ENCODE measurements at regions of chr12 and their contacts with region 1.

Region 1: GRCh38 chr12:47812797-47813510 is 6.7 kb downstream of the HDAC7 start:
- DNase-seq: peak; percentile 61 to 95 (median 85)
- ATAC-seq: peak; percentile 84
- H3K4me3 ChIP-seq: peak overlapping the region; percentile 80
- H3K4me3 Mint-ChIP-seq: peak overlapping the region; percentile 83 to 96 (median 88)
- H3K27ac ChIP-seq: peak overlapping the region; percentile 88
- H3K27ac Mint-ChIP-seq: peak overlapping the region; percentile 92 to 99 (median 97)
- H3K4me1 ChIP-seq: peaks cover 85 to 87% of the 10 kb centered on the region in 2 donors
- H3K4me1 Mint-ChIP-seq: peaks cover 77 to 100% (median 90%) of the 10 kb centered on the region in 7 donors
- H3K27me3 ChIP-seq: no peaks in the 10 kb centered on the region
- H3K27me3 Mint-ChIP-seq: no peaks in the 10 kb centered on the region

Region 2: DNA sequence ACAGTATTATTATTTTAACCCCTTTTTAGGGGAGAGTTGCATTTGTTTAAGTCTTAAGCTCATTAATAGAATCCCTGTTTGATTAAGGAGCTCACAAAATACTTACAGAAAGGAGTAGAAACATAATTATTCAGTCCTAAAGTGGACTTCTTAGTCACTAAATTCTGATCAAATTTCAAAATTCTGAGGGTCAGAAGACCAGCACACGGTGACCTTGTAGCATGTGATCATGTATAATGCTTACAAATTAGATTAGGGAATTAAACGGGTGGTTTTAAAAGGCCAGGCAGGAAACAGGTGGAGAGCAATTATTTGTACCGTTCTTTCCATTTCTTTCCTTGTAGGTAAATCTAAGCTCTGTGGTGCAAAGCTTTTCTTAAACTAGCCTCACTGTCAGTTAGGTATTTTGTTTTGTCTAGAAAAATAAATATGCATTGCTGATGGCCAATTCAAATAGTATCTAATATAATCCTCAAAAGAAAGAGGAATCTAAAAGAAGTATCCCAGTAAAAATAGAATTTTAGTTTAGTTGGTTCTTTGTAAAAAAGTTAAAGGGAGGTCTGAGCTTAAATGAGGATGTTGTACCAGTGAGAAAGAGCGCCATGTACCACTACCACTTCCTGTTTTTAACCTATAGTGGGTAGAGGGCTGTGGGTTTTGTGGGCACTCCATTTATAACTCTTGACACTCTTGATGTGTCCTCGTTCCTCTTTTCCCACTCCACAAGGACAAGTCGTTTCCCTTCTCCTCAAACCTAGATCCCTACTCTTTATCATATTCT is 1595.2 kb before region 1 on chr12:
- CTCF ChIA-PET with region 1: no interaction called
- POLR2A ChIA-PET with region 1: no interaction called
- intact Hi-C with region 1: loop called (anchors 5 to 10 kb)
- DNase-seq: peak in 8 of 9 donors; percentile 58 to 87 (median 84)
- ATAC-seq: peak; percentile 54
- H3K4me3 ChIP-seq: peak overlapping the region; percentile 41
- H3K4me3 Mint-ChIP-seq: peak overlapping the region; percentile 74 to 89 (median 81)
- H3K27ac ChIP-seq: peak overlapping the region; percentile 78
- H3K27ac Mint-ChIP-seq: peak overlapping the region; percentile 89 to 100 (median 99)
- H3K4me1 ChIP-seq: peaks cover 95% of the 10 kb centered on the region in 2 donors
- H3K4me1 Mint-ChIP-seq: peaks cover 69 to 100% (median 98%) of the 10 kb centered on the region in 7 donors
- H3K27me3 ChIP-seq: no peaks in the 10 kb centered on the region
- H3K27me3 Mint-ChIP-seq: no peaks in the 10 kb centered on the region

Region 3: GRCh38 chr12:47705566-47706425 is 107.2 kb before region 1 on chr12 and contains the start of gene RPAP3:
- CTCF ChIA-PET with region 1: interaction called, 3 read pairs
- POLR2A ChIA-PET with region 1: interaction called, 4 read pairs
- intact Hi-C with region 1: loop called (anchors 1 kb)
- DNase-seq: peak; percentile 91 to 99 (median 95)
- ATAC-seq: peak; percentile 97
- H3K4me3 ChIP-seq: peak within 1 kb of the TSS; percentile 59
- H3K4me3 Mint-ChIP-seq: peak within 1 kb of the TSS; percentile 92 to 99 (median 98)
- H3K27ac ChIP-seq: peak within 1 kb of the TSS; percentile 85
- H3K27ac Mint-ChIP-seq: peak within 1 kb of the TSS; percentile 93 to 99 (median 97)
- H3K4me1 ChIP-seq: peaks cover 21 to 27% of the 10 kb centered on the region in 2 donors
- H3K4me1 Mint-ChIP-seq: peaks cover 48 to 73% (median 63%) of the 10 kb centered on the region in 7 donors
- H3K27me3 ChIP-seq: no peaks in the 10 kb centered on the region
- H3K27me3 Mint-ChIP-seq: no peaks in the 10 kb centered on the region
- total RNA-seq, gene RPAP3: 28.5 to 51.3 (median 43.9) TPM

Region 4: DNA sequence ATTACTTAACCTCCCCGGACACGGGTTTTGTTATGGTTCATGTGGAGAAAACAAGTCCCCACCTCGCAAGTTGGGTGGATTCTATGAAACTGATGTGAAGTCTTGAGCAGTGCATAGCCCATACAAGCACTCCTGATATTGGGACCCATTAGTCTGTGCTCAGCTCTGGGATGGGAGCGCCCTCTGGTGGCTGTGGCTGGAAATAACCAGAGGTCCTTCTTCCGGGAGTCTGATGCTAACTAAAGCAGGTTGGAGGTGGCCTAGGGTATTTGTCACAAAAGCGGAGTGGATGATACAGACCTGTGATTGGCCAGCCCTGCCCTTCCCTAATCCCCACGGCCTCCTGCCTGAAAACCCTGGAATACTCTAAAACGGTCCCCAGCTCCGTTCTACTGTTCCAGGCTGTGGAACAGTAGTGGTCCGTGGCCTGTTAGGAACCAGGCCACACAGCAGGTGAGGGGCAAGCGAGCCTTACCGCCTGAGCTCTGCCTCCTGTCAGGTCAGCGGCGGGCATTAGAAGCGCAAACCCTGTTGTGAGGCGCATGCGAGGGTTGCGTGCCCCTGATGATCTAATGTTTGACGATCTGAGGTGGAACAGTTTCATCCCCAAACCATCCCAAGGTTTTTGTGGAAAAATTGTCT is 33.5 kb before region 1 on chr12:
- CTCF ChIA-PET with region 1: interaction called, 9 read pairs
- POLR2A ChIA-PET with region 1: interaction called, 8 read pairs
- intact Hi-C with region 1: loop called (anchors 1 kb)
- DNase-seq: peak; percentile 77 to 96 (median 88)
- ATAC-seq: peak; percentile 95
- H3K4me3 ChIP-seq: no peak overlapping the region
- H3K4me3 Mint-ChIP-seq: no peak overlapping the region
- H3K27ac ChIP-seq: no peak overlapping the region
- H3K27ac Mint-ChIP-seq: peak overlapping the region; percentile 35 to 82 (median 60)
- H3K4me1 ChIP-seq: no peaks in the 10 kb centered on the region
- H3K4me1 Mint-ChIP-seq: peaks cover 19 to 46% (median 25%) of the 10 kb centered on the region in 7 donors
- H3K27me3 ChIP-seq: no peaks in the 10 kb centered on the region
- H3K27me3 Mint-ChIP-seq: no peaks in the 10 kb centered on the region

Region 5: DNA sequence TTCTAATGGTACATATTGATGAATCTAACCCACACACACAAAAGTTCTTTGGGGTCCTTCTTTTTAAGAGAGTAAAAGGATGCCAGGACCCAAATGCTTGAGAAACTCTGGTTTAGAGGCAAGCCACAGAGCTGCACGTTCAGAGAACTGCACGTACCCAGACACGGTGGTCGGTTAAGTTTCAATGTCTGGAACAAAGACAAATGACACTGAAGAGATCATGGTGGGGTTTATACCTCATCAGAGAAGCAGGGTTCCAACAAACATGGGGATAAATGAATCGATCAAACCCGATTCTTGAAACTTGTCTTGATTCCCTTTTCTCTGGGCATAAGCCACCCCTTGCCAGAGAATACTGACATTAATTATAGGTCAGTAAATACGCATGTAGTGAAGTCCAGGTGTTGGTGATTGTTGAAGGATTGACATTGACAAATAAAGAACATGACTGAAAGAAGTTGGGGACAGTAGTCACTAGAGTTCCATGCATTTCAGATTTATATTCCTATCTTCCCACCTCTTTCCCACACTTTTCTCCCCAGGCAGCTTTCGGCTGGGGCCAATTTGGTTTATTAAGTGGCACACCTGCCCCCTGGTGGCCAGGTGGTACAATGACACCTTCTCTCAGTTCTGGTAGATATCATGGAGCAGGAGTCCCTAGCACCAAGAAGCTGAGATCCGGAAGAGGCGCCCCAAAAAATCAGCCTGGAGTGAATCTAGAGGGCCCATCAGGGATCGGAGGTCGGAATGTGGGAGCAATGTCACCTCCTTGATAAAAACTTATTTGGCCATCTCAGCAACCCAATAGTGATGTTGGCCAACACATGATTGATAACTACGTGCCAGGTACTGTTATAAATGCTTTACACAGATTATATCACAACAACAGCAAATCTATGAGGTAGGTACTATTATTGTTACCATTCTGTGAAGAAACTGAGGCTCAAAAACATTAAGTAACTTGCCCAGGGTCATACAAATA is 24.5 kb after region 1 on chr12:
- CTCF ChIA-PET with region 1: interaction called, 539 read pairs
- POLR2A ChIA-PET with region 1: interaction called, 364 read pairs
- intact Hi-C with region 1: loop called (anchors 1 kb)
- DNase-seq: peak; percentile 52 to 80 (median 65)
- ATAC-seq: peak; percentile 68
- H3K4me3 ChIP-seq: no peak overlapping the region
- H3K4me3 Mint-ChIP-seq: no peak overlapping the region
- H3K27ac ChIP-seq: no peak overlapping the region
- H3K27ac Mint-ChIP-seq: peak overlapping the region in 8 of 9 donors; percentile 35 to 97 (median 76)
- H3K4me1 ChIP-seq: peaks cover 19 to 52% of the 10 kb centered on the region in 2 donors
- H3K4me1 Mint-ChIP-seq: peaks cover 38 to 71% (median 55%) of the 10 kb centered on the region in 7 donors
- H3K27me3 ChIP-seq: no peaks in the 10 kb centered on the region
- H3K27me3 Mint-ChIP-seq: no peaks in the 10 kb centered on the region

Region 6: GRCh38 chr12:48157018-48157888 is 344.3 kb after region 1 on chr12 and contains the start of gene ASB8:
- CTCF ChIA-PET with region 1: no interaction called
- POLR2A ChIA-PET with region 1: no interaction called
- intact Hi-C with region 1: loop called (anchors 1 kb)
- DNase-seq: peak; percentile 95 to 99 (median 98)
- ATAC-seq: peak; percentile 98
- H3K4me3 ChIP-seq: peak within 1 kb of the TSS; percentile 97
- H3K4me3 Mint-ChIP-seq: peak within 1 kb of the TSS; percentile 90 to 99 (median 97)
- H3K27ac ChIP-seq: peak within 1 kb of the TSS; percentile 84
- H3K27ac Mint-ChIP-seq: peak within 1 kb of the TSS; percentile 95 to 99 (median 99)
- H3K4me1 ChIP-seq: peaks cover 8 to 20% of the 10 kb centered on the region in 2 donors
- H3K4me1 Mint-ChIP-seq: peaks cover 22 to 65% (median 56%) of the 10 kb centered on the region in 7 donors
- H3K27me3 ChIP-seq: no peaks in the 10 kb centered on the region
- H3K27me3 Mint-ChIP-seq: peaks cover 0 to 5% (median 0%) of the 10 kb centered on the region in 5 donors
- total RNA-seq, gene ASB8: 42.9 to 75.9 (median 54.9) TPM

Region 7: GRCh38 chr12:48169011-48169410 is 356.1 kb after region 1 on chr12:
- CTCF ChIA-PET with region 1: no interaction called
- POLR2A ChIA-PET with region 1: no interaction called
- intact Hi-C with region 1: no loop called
- DNase-seq: no peak
- ATAC-seq: no peak
- H3K4me3 ChIP-seq: no peak overlapping the region
- H3K4me3 Mint-ChIP-seq: no peak overlapping the region
- H3K27ac ChIP-seq: no peak overlapping the region
- H3K27ac Mint-ChIP-seq: no peak overlapping the region
- H3K4me1 ChIP-seq: no peaks in the 10 kb centered on the region
- H3K4me1 Mint-ChIP-seq: peaks cover 0 to 5% (median 2%) of the 10 kb centered on the region in 7 donors
- H3K27me3 ChIP-seq: no peaks in the 10 kb centered on the region
- H3K27me3 Mint-ChIP-seq: peaks cover 0 to 26% (median 12%) of the 10 kb centered on the region in 5 donors

Region 8: GRCh38 chr12:48681738-48682532 is 869.0 kb after region 1 on chr12 and contains the start of gene KANSL2:
- CTCF ChIA-PET with region 1: no interaction called
- POLR2A ChIA-PET with region 1: no interaction called
- intact Hi-C with region 1: loop called in 1 of 2 experiments (anchors 10 kb)
- DNase-seq: peak; percentile 79 to 98 (median 96)
- ATAC-seq: peak; percentile 97
- H3K4me3 ChIP-seq: peak within 1 kb of the TSS; percentile 88
- H3K4me3 Mint-ChIP-seq: peak within 1 kb of the TSS; percentile 93 to 99 (median 97)
- H3K27ac ChIP-seq: peak within 1 kb of the TSS; percentile 90
- H3K27ac Mint-ChIP-seq: peak within 1 kb of the TSS; percentile 97 to 99 (median 98)
- H3K4me1 ChIP-seq: peaks cover 30 to 38% of the 10 kb centered on the region in 2 donors
- H3K4me1 Mint-ChIP-seq: peaks cover 32 to 59% (median 53%) of the 10 kb centered on the region in 7 donors
- H3K27me3 ChIP-seq: no peaks in the 10 kb centered on the region
- H3K27me3 Mint-ChIP-seq: no peaks in the 10 kb centered on the region
- total RNA-seq, gene KANSL2: 37.5 to 117 (median 74.4) TPM

Measured in naive thymus-derived CD4-positive, alpha-beta T cell (primary cell).